Heart right ventricle (tissue), 16 donors: ENCODE measurements at regions of chr9 and their contacts with region 1.

Region 1: GRCh38 chr9:91101611-91102168 is 260.0 kb downstream of the AUH start:
- DNase-seq: no peak
- ATAC-seq: peak in 1 of 8 donors; percentile 7
- H3K4me3 ChIP-seq: no peak overlapping the region
- H3K27ac ChIP-seq: peak overlapping the region; percentile 50 to 89 (median 83)
- H3K4me1 ChIP-seq: peaks cover 10 to 45% (median 36%) of the 10 kb centered on the region in 9 donors
- H3K27me3 ChIP-seq: no peaks in the 10 kb centered on the region
- CTCF ChIP-seq: no peak

Region 2: GRCh38 chr9:91150998-91151717 is 49.5 kb after region 1 on chr9:
- intact Hi-C with region 1: loop called in 1 of 10 experiments (anchors 10 kb)
- DNase-seq: no peak
- ATAC-seq: peak in 6 of 8 donors; percentile 21 to 56 (median 36)
- H3K4me3 ChIP-seq: no peak overlapping the region
- H3K27ac ChIP-seq: peak overlapping the region in 1 of 10 donors; percentile 81
- H3K4me1 ChIP-seq: peaks cover 0 to 50% (median 0%) of the 10 kb centered on the region in 9 donors
- H3K27me3 ChIP-seq: no peaks in the 10 kb centered on the region
- CTCF ChIP-seq: no peak

Region 3: GRCh38 chr9:91346652-91347051 is 245.0 kb after region 1 on chr9:
- intact Hi-C with region 1: no loop called
- DNase-seq: no peak
- ATAC-seq: no peak
- H3K4me3 ChIP-seq: no peak overlapping the region
- H3K27ac ChIP-seq: no peak overlapping the region
- H3K4me1 ChIP-seq: peaks cover 0 to 2% (median 0%) of the 10 kb centered on the region in 9 donors
- H3K27me3 ChIP-seq: no peaks in the 10 kb centered on the region
- CTCF ChIP-seq: no peak

Region 4: DNA sequence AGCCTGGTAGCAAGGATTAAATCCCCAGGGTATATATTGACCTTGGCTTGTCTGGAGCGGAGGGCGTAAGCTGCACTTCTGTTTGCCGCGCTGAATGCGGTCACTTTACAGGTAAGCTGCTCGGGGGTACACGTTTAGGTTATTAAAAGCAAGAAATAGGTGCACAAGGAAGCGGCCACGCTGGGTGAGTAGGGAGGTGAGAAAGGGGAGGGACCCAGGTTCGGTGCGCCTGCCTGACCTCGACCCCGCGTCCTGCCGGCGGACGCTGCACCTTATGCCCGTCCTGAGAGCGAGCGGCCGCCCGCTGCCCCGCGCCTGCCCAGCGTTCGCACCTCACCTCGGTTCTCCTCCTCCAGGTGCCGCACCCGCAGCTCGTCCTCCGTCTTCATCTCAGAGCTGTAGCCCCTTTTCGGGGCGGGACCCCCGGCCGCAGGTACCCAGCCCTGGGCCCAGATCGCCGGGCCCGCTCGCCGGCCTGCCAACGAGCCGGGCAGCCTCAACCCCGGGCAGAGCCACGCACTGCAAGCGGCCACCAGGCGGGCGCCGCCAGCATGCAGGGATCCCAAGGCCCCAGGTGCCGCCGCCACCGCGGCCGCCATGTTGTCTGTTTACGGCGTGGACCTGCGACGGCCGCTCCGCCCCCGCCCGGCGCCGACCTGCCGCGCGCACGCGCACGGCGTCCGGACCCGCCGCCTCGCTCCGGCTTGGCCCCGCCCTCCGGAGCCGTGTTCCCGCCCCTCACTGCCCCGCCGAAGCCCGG is 259.8 kb after region 1 on chr9 and contains the start of gene AUH:
- intact Hi-C with region 1: loop called in 1 of 10 experiments (anchors 5 kb)
- DNase-seq: peak; percentile 79 to 90
- ATAC-seq: peak; percentile 96 to 100 (median 98)
- H3K4me3 ChIP-seq: peak within 1 kb of the TSS; percentile 92 to 100 (median 98)
- H3K27ac ChIP-seq: peak within 1 kb of the TSS; percentile 85 to 97 (median 92)
- H3K4me1 ChIP-seq: peaks cover 0 to 43% (median 34%) of the 10 kb centered on the region in 9 donors
- H3K27me3 ChIP-seq: no peaks in the 10 kb centered on the region
- CTCF ChIP-seq: peak in 3 of 9 donors; percentile 7 to 17 (median 12)
- total RNA-seq, gene AUH: 30.6 to 51.3 (median 44.2) TPM